Endothelial cell of umbilical vein (primary cell): ENCODE measurements at regions of chr9 and their contacts with region 1.

Region 1: GRCh38 chr9:128863647-128864046 is 18.1 kb downstream of the KYAT1 start:
- DNase-seq: peak; percentile 69
- H3K4me3 ChIP-seq: no peak overlapping the region
- H3K27ac ChIP-seq: no peak overlapping the region
- H3K4me1 ChIP-seq: no peaks in the 10 kb centered on the region
- H3K27me3 ChIP-seq: no peaks in the 10 kb centered on the region
- CTCF ChIP-seq: peak; percentile 73 to 97
- POLR2A ChIP-seq: no peak

Region 2: DNA sequence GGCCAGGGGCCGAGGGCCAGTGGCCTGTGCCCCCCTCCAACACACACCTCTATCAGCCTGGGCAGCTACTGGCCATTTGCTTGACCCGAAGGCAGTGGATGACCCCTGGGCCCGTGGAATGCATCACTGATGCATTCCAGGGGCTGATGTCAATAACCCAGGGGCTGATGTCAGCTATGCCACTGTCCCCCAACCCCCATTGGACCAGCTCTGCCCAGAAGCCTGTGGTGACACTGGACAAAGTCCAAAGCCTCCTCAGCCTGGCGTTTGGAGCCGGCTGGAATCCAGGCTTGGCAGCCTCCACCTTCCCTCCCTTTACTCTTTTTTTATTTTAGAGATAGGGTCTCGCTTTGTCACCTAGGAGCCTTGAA is 12.1 kb after region 1 on chr9:
- CTCF ChIA-PET with region 1: interaction called, 28 read pairs
- POLR2A ChIA-PET with region 1: interaction called, 6 read pairs
- dilution Hi-C with region 1: no loop called
- intact Hi-C with region 1: no loop called
- DNase-seq: no peak
- H3K4me3 ChIP-seq: no peak overlapping the region
- H3K27ac ChIP-seq: no peak overlapping the region
- H3K4me1 ChIP-seq: peaks cover 6% of the 10 kb centered on the region
- H3K27me3 ChIP-seq: no peaks in the 10 kb centered on the region
- CTCF ChIP-seq: no peak
- POLR2A ChIP-seq: no peak

Region 3: DNA sequence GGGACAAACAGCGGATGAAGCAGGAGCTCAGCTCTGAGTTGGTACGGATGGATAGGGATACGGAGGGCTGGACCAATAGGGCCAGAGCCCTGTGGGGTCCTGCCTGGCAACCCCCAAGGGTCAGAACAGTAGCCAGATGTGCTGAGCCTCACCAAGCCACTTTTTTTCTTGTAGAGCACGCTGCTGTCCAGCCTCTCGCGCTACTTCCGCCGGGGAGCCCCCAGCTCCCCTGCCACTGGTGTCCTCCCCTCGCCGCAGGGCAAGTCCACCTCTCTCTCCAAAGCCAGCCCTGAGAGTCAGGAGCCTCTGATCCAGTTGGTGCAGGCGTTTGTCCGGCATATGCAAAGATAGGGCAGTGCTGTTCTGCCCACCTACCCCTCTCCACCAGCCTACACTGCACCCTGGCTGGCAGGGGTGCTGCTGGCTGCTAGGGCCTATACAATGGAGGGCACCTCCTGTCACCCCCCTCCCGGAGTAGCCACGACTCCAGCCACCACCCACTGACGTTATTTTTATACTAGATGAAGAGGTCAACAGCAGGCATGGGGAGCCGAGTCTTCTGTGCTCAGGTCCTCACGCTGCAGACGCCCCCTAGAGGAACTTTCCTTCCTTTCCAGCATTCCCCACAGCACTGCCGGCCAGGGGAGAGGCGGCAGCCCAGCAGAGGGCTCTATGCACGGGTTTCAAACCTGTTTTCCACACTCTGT is 142.8 kb after region 1 on chr9:
- CTCF ChIA-PET with region 1: no interaction called
- POLR2A ChIA-PET with region 1: no interaction called
- dilution Hi-C with region 1: no loop called
- intact Hi-C with region 1: loop called (anchors 5 kb)
- DNase-seq: peak; percentile 70
- H3K4me3 ChIP-seq: no peak overlapping the region
- H3K27ac ChIP-seq: no peak overlapping the region
- H3K4me1 ChIP-seq: no peaks in the 10 kb centered on the region
- H3K27me3 ChIP-seq: no peaks in the 10 kb centered on the region
- CTCF ChIP-seq: peak; percentile 91 to 93
- POLR2A ChIP-seq: no peak

Region 4: DNA sequence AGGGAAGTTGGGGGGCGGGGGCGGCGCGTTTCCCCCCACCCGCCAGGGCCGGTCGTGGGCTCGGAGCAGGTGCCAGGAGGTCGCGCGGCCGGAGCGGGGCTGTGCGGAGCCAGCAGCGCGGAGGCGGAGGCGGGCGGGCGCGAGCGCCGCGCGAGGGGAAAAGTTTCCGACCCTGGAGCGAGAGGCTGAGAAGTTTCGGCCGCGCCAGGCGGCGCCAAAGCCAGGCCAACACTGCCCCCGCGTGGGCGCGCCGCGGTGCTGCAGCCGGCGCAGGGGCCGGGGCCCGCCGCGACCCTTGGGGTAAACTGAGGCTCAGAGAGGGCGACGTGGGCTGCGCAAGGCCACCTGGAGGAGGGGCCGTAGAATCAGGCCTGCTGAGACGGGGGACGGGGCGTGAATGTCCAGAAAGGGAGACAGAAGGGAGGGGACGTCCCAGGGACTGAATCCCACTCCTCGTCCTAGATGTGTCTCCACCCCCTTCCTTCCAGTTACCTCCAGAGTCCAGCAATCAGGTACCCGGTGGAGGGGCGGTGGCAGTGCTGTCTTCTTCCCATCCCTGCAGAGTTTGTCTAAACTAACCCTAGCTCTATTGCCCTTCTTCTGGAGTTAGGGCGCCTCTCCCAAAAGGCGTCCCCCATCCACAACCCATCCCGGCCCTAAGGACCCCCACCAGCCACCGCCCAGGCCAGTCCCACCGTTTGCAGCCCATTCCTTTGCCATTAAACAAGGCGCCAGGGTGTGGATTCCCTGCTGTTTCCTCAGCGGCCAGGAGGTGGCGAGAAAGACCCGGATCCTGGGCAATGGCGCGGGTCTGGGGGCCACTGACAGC is 747.0 kb after region 1 on chr9:
- CTCF ChIA-PET with region 1: no interaction called
- POLR2A ChIA-PET with region 1: no interaction called
- dilution Hi-C with region 1: no loop called
- intact Hi-C with region 1: no loop called
- DNase-seq: peak; percentile 64
- H3K4me3 ChIP-seq: peak overlapping the region; percentile 24 to 56 (median 46)
- H3K27ac ChIP-seq: peak overlapping the region; percentile 16
- H3K4me1 ChIP-seq: peaks cover 14% of the 10 kb centered on the region
- H3K27me3 ChIP-seq: peaks cover 0 to 5% of the 10 kb centered on the region in 2 experiments
- CTCF ChIP-seq: peak; percentile 86 to 96
- POLR2A ChIP-seq: no peak